GM12878 (cell line): ENCODE measurements at regions of chr6 and their contacts with region 1.

Region 1: DNA sequence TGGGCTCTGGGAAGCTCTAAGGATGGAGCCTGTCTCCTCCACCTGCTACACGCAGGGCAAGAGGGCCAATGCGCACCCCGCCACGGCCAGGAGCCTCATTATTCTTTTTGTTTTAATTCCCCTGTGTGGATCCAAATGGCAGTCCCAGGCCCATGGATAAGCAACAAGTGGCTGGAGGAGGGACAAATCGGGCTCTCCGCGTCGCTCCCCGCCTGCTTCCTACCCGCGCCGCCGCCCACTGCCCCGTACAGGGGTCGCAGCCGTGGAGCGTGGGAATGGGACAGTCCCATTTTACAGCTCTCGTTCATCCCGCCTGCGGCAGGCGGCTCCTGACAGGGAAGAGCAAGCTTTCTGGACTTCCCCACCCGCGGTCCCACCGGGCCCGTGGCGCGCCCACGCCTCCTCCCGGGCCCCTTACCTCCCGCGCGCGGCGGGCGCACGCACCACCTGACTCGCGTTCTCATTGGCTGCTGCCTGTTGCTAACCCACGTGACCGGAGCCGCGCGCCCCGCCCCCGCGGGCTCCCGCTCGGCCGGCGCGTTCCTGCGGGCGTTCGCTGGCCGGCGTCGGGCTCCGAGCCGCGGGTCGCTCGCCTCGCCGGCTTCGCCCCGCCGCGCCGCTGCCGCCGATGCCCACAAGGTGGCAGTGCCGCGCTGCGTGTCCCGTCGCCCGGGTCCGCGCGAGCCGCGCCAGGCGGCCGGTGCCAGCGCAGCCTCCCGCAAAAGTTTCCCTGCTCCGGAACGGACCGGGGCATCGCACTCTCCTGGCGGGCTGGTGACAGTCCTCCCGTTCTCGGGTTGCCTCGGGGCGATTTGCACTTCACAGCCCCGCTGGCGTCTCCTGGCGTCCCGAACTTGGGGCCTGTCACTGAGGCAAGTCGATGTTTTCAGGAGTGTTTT is 93.3 kb downstream of the CD83 start:
- DNase-seq: peak; percentile 48
- ATAC-seq: peak; percentile 98
- H3K4me3 ChIP-seq: peak overlapping the region; percentile 91
- H3K27ac ChIP-seq: peak overlapping the region; percentile 81
- H3K4me1 ChIP-seq: peaks cover 16% of the 10 kb centered on the region
- H3K27me3 ChIP-seq: no peaks in the 10 kb centered on the region
- CTCF ChIP-seq: peak; percentile 49 to 80 (median 60); a peak in 5 of 6 replicates
- EP300 ChIP-seq: no peak
- POLR2A ChIP-seq: peak; percentile 78
- RAD21 ChIP-seq: peak; percentile 91

Region 2: GRCh38 chr6:14228571-14228970 is 17.7 kb after region 1 on chr6:
- CTCF ChIA-PET with region 1: interaction called, 3 read pairs
- POLR2A ChIA-PET with region 1: no interaction called
- RAD21 ChIA-PET with region 1: interaction called, 7 read pairs
- SMC1A ChIA-PET with region 1: interaction called, 14 read pairs
- in situ Hi-C with region 1: no loop called
- intact Hi-C with region 1: no loop called
- DNase-seq: no peak
- ATAC-seq: no peak
- H3K4me3 ChIP-seq: no peak overlapping the region
- H3K27ac ChIP-seq: no peak overlapping the region
- H3K4me1 ChIP-seq: no peaks in the 10 kb centered on the region
- H3K27me3 ChIP-seq: no peaks in the 10 kb centered on the region
- CTCF ChIP-seq: no peak
- EP300 ChIP-seq: no peak
- POLR2A ChIP-seq: no peak
- RAD21 ChIP-seq: no peak

Region 3: DNA sequence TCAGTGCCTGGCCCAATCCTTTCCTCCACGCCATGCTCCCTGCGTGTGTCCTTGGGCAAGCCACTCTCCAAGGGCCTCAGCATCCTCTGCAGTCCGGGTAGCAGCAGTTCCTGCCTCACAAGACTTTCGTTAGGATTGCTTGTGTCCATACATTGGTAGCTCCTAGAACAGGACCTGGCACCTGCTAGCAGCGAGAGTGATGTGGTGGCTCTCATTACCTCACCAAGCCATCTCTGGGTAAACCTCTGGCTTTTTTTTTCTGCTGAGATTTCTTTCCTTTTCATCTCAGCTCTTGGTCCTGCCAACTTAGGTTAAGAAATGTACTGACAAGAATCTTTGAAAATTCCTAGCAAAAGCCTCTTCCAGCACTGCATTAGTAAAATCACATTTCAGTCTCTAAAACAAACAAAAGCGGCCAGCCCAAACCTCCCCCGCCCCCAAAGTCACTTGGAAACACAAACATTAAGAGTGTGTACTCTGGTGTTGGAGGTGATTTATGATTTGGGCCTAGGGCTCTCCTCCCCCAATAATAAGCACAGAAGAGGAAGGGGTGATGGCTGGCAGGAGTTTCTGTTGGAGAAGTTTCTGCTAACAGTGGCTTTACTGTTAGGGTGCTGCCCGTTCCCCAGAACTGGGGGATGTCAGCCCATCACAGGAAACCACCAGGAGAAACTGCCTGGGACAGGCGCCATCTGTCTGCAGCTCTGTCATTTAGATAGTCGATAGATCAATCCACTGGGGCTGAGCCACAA is 105.9 kb after region 1 on chr6:
- CTCF ChIA-PET with region 1: interaction called, 7 read pairs
- POLR2A ChIA-PET with region 1: no interaction called
- RAD21 ChIA-PET with region 1: interaction called, 3 read pairs
- SMC1A ChIA-PET with region 1: interaction called, 7 read pairs
- in situ Hi-C with region 1: no loop called
- intact Hi-C with region 1: loop called (anchors 5 kb)
- DNase-seq: no peak
- ATAC-seq: peak; percentile 54; the same call in 2 of the 3 replicates
- H3K4me3 ChIP-seq: no peak overlapping the region
- H3K27ac ChIP-seq: no peak overlapping the region
- H3K4me1 ChIP-seq: peaks cover 9% of the 10 kb centered on the region
- H3K27me3 ChIP-seq: no peaks in the 10 kb centered on the region
- CTCF ChIP-seq: peak; percentile 21 to 28 (median 28); a peak in 2 of 6 replicates
- EP300 ChIP-seq: no peak
- POLR2A ChIP-seq: no peak
- RAD21 ChIP-seq: no peak; the same call in 1 of the 2 replicates

Region 4: GRCh38 chr6:15491255-15491985 is 1280.5 kb after region 1 on chr6:
- CTCF ChIA-PET with region 1: no interaction called
- POLR2A ChIA-PET with region 1: no interaction called
- RAD21 ChIA-PET with region 1: no interaction called
- SMC1A ChIA-PET with region 1: no interaction called
- in situ Hi-C with region 1: loop called (anchors 25 kb)
- intact Hi-C with region 1: loop called (anchors 5 kb)
- DNase-seq: peak; percentile 17
- ATAC-seq: peak; percentile 94
- H3K4me3 ChIP-seq: no peak overlapping the region
- H3K27ac ChIP-seq: no peak overlapping the region
- H3K4me1 ChIP-seq: no peaks in the 10 kb centered on the region
- H3K27me3 ChIP-seq: no peaks in the 10 kb centered on the region
- CTCF ChIP-seq: peak; percentile 86 to 87 (median 86)
- EP300 ChIP-seq: no peak
- POLR2A ChIP-seq: no peak
- RAD21 ChIP-seq: peak; percentile 91